ENCODE measurements at regions of chr11 and their contacts with region 1.

Region 1: GRCh38 chr11:115222218-115222862 is 281.9 kb downstream of the CADM1 start:
- DNase-seq: peak; percentile 63
- H3K4me3 Mint-ChIP-seq: no peak overlapping the region
- H3K27ac Mint-ChIP-seq: peak overlapping the region; percentile 23
- H3K4me1 Mint-ChIP-seq: peaks cover 35% of the 10 kb centered on the region
- H3K27me3 Mint-ChIP-seq: peaks cover 22% of the 10 kb centered on the region

Region 2: GRCh38 chr11:115193914-115194801 is 28.2 kb before region 1 on chr11:
- CTCF ChIA-PET with region 1: no interaction called
- POLR2A ChIA-PET with region 1: interaction called, 5 read pairs
- intact Hi-C with region 1: loop called (anchors 1 kb)
- DNase-seq: no peak
- H3K4me3 Mint-ChIP-seq: peak overlapping the region; percentile 42
- H3K27ac Mint-ChIP-seq: peak overlapping the region; percentile 72
- H3K4me1 Mint-ChIP-seq: peaks cover 18% of the 10 kb centered on the region
- H3K27me3 Mint-ChIP-seq: peaks cover 7% of the 10 kb centered on the region

Region 3: GRCh38 chr11:115391598-115391997 is 169.3 kb after region 1 on chr11:
- CTCF ChIA-PET with region 1: no interaction called
- POLR2A ChIA-PET with region 1: no interaction called
- intact Hi-C with region 1: no loop called
- DNase-seq: no peak
- H3K4me3 Mint-ChIP-seq: no peak overlapping the region
- H3K27ac Mint-ChIP-seq: no peak overlapping the region
- H3K4me1 Mint-ChIP-seq: no peaks in the 10 kb centered on the region
- H3K27me3 Mint-ChIP-seq: peaks cover 4% of the 10 kb centered on the region

Measured in activated CD4-positive, alpha-beta memory T cell treated with anti-CD3 and anti-CD28 coated beads for 36 hours (primary cell).